Caco-2 (cell line): ENCODE measurements at regions of chr5 and their contacts with region 1.

Region 1: GRCh38 chr5:95858661-95859326 is 36.3 kb upstream of the GLRX start:
- DNase-seq: peak; percentile 90 to 94
- H3K4me3 ChIP-seq: no peak overlapping the region
- H3K4me3 Mint-ChIP-seq: peak overlapping the region; percentile 73
- H3K27ac Mint-ChIP-seq: peak overlapping the region; percentile 32
- H3K4me1 ChIP-seq: peaks cover 44% of the 10 kb centered on the region
- H3K4me1 Mint-ChIP-seq: peaks cover 52% of the 10 kb centered on the region
- H3K27me3 ChIP-seq: no peaks in the 10 kb centered on the region
- H3K27me3 Mint-ChIP-seq: no peaks in the 10 kb centered on the region
- CTCF ChIP-seq: peak; percentile 92 to 98

Region 2: DNA sequence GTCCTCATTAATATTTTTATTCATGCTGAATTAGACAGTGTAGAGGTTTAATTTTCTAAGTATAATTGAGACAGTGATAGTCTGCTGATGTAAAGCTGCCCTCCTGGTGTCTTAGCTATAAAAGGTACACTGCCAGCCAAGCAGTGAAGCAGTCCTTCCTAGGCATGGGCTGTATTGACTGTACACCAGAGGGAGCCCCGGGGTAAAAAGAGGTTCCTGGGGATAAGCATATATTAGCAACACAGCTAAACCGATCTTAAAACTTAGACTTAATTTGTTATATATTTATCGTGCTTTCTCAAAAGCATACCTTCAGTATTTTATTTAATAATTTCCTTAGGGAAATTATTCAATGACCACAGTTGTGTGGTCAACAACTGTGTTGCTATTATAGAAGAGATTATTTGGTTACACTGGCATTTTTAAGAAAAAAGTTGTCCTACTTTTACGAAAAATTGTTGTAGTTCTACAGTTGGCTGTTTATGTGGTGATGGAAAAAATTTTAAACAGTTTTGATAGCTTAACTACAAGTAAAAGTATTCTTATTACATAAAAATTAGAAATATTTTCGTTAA is 34.1 kb after region 1 on chr5:
- CTCF ChIA-PET with region 1: interaction called, 4 read pairs
- POLR2A ChIA-PET with region 1: no interaction called
- intact Hi-C with region 1: loop called (anchors 2 kb)
- DNase-seq: peak; percentile 65 to 72
- H3K4me3 ChIP-seq: no peak overlapping the region
- H3K4me3 Mint-ChIP-seq: no peak overlapping the region
- H3K27ac Mint-ChIP-seq: no peak overlapping the region
- H3K4me1 ChIP-seq: peaks cover 5% of the 10 kb centered on the region
- H3K4me1 Mint-ChIP-seq: peaks cover 4% of the 10 kb centered on the region
- H3K27me3 ChIP-seq: no peaks in the 10 kb centered on the region
- H3K27me3 Mint-ChIP-seq: no peaks in the 10 kb centered on the region
- CTCF ChIP-seq: peak; percentile 61 to 75

Region 3: DNA sequence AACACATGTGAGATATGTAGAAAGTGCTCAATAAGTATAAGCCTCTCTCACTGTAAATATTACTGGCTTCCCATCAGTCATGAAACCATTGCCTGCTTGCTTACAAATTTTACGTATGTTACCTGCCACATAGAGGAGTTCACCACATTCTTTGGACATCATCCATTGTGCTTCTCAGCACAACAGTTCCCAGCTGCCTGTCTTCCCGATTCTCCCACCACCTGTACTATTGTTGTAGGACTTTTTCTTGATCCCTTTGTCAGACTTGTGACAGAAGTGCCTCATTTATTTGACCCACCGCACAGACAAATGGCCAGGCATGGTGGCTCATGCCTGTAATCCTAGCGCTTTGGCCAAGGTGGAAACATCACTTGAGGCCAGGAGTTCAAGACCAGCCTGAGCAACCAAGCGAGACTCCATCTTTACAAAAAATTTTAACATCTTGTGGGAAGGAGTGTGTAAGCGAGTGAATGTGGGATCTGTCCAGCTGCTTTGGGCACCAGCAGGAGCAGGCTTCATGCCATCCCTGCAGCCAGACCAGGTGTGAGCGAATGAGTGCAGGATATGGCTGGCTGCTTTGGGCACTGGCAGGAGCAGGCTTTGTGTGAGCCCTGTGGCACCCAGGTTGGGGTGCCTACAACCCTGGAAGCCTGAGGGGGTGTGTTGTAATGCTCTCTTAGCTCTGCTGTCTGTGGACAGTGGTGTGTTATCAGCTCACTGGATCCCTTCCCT is 242.7 kb after region 1 on chr5:
- CTCF ChIA-PET with region 1: no interaction called
- POLR2A ChIA-PET with region 1: no interaction called
- intact Hi-C with region 1: no loop called
- DNase-seq: no peak
- H3K4me3 ChIP-seq: no peak overlapping the region
- H3K4me3 Mint-ChIP-seq: no peak overlapping the region
- H3K27ac Mint-ChIP-seq: no peak overlapping the region
- H3K4me1 ChIP-seq: no peaks in the 10 kb centered on the region
- H3K4me1 Mint-ChIP-seq: no peaks in the 10 kb centered on the region
- H3K27me3 ChIP-seq: no peaks in the 10 kb centered on the region
- H3K27me3 Mint-ChIP-seq: no peaks in the 10 kb centered on the region
- CTCF ChIP-seq: no peak

Region 4: DNA sequence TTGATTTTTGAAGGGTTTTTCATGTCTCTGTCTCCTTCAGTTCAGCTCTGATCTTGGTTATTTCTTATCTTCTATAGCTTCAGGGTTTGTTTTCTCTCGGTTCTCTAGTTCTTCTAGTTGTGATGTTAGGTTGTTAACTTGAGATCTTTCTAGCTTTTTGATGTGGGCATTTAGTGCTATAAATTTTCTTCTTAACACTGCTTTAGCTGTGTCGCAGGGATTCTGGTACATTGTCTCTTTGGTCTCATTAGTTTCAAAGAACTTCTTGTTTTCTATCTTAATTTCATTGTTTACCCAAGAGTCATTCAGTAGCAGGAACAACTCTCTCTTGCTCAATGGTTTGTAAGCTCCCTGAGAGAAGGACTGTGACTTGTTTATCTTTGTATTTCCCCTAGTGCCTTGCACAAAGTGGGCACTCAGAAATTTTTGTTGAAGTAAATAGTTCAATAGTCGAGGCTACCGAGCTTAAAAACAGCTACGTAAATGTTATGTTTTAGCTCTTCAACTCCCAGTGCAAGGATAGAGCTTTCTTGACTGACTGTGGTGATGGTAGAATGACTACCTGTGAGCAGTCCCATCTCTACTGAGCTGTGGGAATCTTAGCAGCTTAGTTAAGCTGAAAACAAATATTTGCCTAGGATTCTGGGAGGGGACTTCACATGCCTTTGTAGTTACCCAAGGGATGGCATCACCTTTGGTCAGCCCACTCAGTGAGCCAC is 328.7 kb after region 1 on chr5:
- CTCF ChIA-PET with region 1: no interaction called
- POLR2A ChIA-PET with region 1: no interaction called
- intact Hi-C with region 1: loop called (anchors 5 kb)
- DNase-seq: peak; percentile 65 to 73
- H3K4me3 ChIP-seq: no peak overlapping the region
- H3K4me3 Mint-ChIP-seq: peak overlapping the region; percentile 39
- H3K27ac Mint-ChIP-seq: peak overlapping the region; percentile 44
- H3K4me1 ChIP-seq: peaks cover 16% of the 10 kb centered on the region
- H3K4me1 Mint-ChIP-seq: peaks cover 44% of the 10 kb centered on the region
- H3K27me3 ChIP-seq: no peaks in the 10 kb centered on the region
- H3K27me3 Mint-ChIP-seq: no peaks in the 10 kb centered on the region
- CTCF ChIP-seq: no peak

Region 5: GRCh38 chr5:96247097-96247701 is 388.4 kb after region 1 on chr5:
- CTCF ChIA-PET with region 1: no interaction called
- POLR2A ChIA-PET with region 1: no interaction called
- intact Hi-C with region 1: loop called (anchors 5 kb)
- DNase-seq: no peak
- H3K4me3 ChIP-seq: no peak overlapping the region
- H3K4me3 Mint-ChIP-seq: no peak overlapping the region
- H3K27ac Mint-ChIP-seq: no peak overlapping the region
- H3K4me1 ChIP-seq: peaks cover 25% of the 10 kb centered on the region
- H3K4me1 Mint-ChIP-seq: peaks cover 26% of the 10 kb centered on the region
- H3K27me3 ChIP-seq: no peaks in the 10 kb centered on the region
- H3K27me3 Mint-ChIP-seq: no peaks in the 10 kb centered on the region
- CTCF ChIP-seq: no peak

Region 6: DNA sequence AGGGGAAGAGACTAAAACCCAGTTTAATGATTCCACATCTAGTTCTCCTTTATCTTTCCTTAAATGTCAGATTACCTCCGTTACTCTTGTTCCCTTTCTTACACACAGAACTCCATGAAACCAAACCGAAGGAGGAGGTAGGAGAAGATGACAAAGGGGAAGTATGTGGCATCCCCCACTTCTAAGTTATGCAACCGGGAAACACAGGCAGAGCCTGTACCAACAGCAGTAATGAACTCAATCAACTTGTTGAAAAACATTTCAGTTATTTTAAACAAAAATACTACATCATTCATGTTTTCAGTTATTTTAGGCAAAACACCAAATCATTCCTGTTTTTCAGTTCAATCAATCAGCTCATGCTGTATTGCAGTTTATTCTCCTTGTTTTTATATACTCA is 472.4 kb after region 1 on chr5:
- CTCF ChIA-PET with region 1: no interaction called
- POLR2A ChIA-PET with region 1: no interaction called
- intact Hi-C with region 1: loop called (anchors 1 kb)
- DNase-seq: no peak
- H3K4me3 ChIP-seq: no peak overlapping the region
- H3K4me3 Mint-ChIP-seq: no peak overlapping the region
- H3K27ac Mint-ChIP-seq: no peak overlapping the region
- H3K4me1 ChIP-seq: peaks cover 35% of the 10 kb centered on the region
- H3K4me1 Mint-ChIP-seq: peaks cover 29% of the 10 kb centered on the region
- H3K27me3 ChIP-seq: no peaks in the 10 kb centered on the region
- H3K27me3 Mint-ChIP-seq: no peaks in the 10 kb centered on the region
- CTCF ChIP-seq: no peak

Region 7: DNA sequence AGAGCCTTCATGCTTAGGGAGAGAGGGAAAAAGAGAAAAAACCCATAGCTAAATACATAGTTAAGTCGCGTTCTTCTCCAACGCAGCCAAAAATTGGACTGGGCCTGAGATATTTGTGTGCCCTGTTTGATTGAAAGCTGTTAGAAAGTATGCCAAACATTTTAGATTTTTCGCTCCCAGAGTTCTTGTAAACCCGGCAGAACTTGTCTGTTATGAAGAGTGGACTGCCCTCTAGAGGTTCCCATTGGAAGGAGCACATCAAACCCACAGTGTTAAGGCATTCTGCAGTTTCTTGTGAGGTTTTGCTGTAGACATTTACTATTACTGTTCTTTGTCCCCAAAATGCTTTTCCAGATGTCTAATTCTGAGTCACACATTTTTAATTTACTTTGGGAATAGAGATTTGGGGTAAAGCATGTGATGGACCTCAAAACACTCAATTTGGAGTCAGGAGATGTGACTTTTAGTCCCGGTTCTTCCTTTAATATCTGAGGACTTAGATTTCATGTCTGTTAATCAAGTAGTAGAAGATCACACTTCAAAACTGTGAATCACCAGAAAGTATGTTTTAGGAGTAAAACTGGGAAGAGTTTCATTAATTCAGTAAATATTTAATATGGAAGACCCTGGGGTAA is 477.7 kb after region 1 on chr5:
- CTCF ChIA-PET with region 1: interaction called, 4 read pairs
- POLR2A ChIA-PET with region 1: no interaction called
- intact Hi-C with region 1: loop called (anchors 1 kb)
- DNase-seq: peak; percentile 78 to 79
- H3K4me3 ChIP-seq: no peak overlapping the region
- H3K4me3 Mint-ChIP-seq: no peak overlapping the region
- H3K27ac Mint-ChIP-seq: no peak overlapping the region
- H3K4me1 ChIP-seq: peaks cover 40% of the 10 kb centered on the region
- H3K4me1 Mint-ChIP-seq: peaks cover 39% of the 10 kb centered on the region
- H3K27me3 ChIP-seq: no peaks in the 10 kb centered on the region
- H3K27me3 Mint-ChIP-seq: no peaks in the 10 kb centered on the region
- CTCF ChIP-seq: peak; percentile 84 to 93

Region 8: GRCh38 chr5:96601811-96602244 is 743.0 kb after region 1 on chr5:
- CTCF ChIA-PET with region 1: no interaction called
- POLR2A ChIA-PET with region 1: no interaction called
- intact Hi-C with region 1: loop called (anchors 2 kb)
- DNase-seq: peak; percentile 58 to 77
- H3K4me3 ChIP-seq: no peak overlapping the region
- H3K4me3 Mint-ChIP-seq: no peak overlapping the region
- H3K27ac Mint-ChIP-seq: no peak overlapping the region
- H3K4me1 ChIP-seq: no peaks in the 10 kb centered on the region
- H3K4me1 Mint-ChIP-seq: peaks cover 7% of the 10 kb centered on the region
- H3K27me3 ChIP-seq: no peaks in the 10 kb centered on the region
- H3K27me3 Mint-ChIP-seq: no peaks in the 10 kb centered on the region
- CTCF ChIP-seq: peak; percentile 82 to 86